Activated T-helper 2 cell treated with anti-CD3 and anti-CD28 coated beads, Interferon-gamma antibody, Interleukin-2, Interleukin-4, amounts not matched to agents 10 μg/mL and 5 μg/mL and 100 μg/mL, durations not matched to agents 14 hours and 24 hours and 36 hours (primary cell): ENCODE measurements at regions of chr9 and their contacts with region 1.

Region 1: GRCh38 chr9:120928483-120929228 is 2.1 kb upstream of the TRAF1 start:
- DNase-seq: peak; percentile 81
- H3K4me3 Mint-ChIP-seq: peak overlapping the region; percentile 92
- H3K27ac Mint-ChIP-seq: peak overlapping the region; percentile 98
- H3K4me1 Mint-ChIP-seq: peaks cover 67% of the 10 kb centered on the region
- H3K27me3 Mint-ChIP-seq: no peaks in the 10 kb centered on the region

Region 2: GRCh38 chr9:120868676-120869359 is 59.8 kb before region 1 on chr9:
- intact Hi-C with region 1: loop called (anchors 2 kb)
- DNase-seq: peak; percentile 93
- H3K4me3 Mint-ChIP-seq: peak overlapping the region; percentile 82
- H3K27ac Mint-ChIP-seq: peak overlapping the region; percentile 91
- H3K4me1 Mint-ChIP-seq: peaks cover 45% of the 10 kb centered on the region
- H3K27me3 Mint-ChIP-seq: no peaks in the 10 kb centered on the region

Region 3: DNA sequence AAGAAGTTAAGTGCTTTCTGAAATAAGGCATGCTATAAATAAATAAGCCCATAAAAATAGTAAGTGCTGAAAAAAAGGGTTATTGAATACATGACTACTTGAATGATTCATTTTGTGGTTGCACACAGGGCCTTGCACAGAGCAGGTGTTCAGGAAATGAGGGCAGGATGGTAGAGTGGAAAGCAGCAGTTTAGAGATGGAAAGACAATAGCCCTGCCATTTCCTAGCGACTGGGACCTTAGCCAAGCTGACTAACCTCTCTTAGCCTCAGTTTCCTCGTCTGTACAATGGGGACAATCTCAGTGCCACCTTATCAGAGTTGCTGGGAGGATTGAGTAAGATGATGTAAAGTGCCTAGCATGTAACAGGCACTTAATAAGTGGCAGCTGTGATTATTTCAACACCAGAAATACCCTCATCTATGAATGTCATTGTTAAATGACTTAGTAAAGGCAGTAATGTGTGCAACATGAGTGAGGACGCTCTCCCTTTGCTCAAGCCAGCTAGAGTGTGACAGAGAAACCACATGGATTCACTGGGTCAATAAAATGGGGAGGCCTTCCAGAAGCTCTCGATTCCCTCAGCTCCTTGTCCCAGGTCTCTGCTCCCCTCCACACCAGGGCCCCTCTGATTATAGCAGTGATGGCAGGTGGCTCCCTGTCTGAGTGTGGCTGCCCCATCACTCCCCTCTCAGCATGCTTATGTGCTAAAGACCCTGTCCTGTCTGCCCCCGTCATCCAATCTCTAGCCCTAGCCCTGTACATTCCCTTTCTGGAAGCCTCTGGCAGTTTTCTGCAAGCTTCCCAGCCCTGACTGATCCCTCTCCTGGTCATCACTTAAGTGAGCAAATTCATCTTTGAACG is 35.7 kb before region 1 on chr9:
- intact Hi-C with region 1: loop called (anchors 1 kb)
- DNase-seq: peak; percentile 66
- H3K4me3 Mint-ChIP-seq: peak overlapping the region; percentile 71
- H3K27ac Mint-ChIP-seq: peak overlapping the region; percentile 100
- H3K4me1 Mint-ChIP-seq: peaks cover 75% of the 10 kb centered on the region
- H3K27me3 Mint-ChIP-seq: no peaks in the 10 kb centered on the region

Region 4: GRCh38 chr9:120916588-120916987 is 12.1 kb before region 1 on chr9:
- intact Hi-C with region 1: loop called (anchors 1 kb)
- DNase-seq: no peak
- H3K4me3 Mint-ChIP-seq: peak overlapping the region; percentile 69
- H3K27ac Mint-ChIP-seq: peak overlapping the region; percentile 77
- H3K4me1 Mint-ChIP-seq: peaks cover 80% of the 10 kb centered on the region
- H3K27me3 Mint-ChIP-seq: no peaks in the 10 kb centered on the region

Region 5: GRCh38 chr9:121201738-121202533 is 273.3 kb after region 1 on chr9 and contains the start of gene RAB14:
- intact Hi-C with region 1: loop called (anchors 5 kb)
- DNase-seq: peak; percentile 100
- H3K4me3 Mint-ChIP-seq: peak within 1 kb of the TSS; percentile 96
- H3K27ac Mint-ChIP-seq: peak within 1 kb of the TSS; percentile 87
- H3K4me1 Mint-ChIP-seq: peaks cover 46% of the 10 kb centered on the region
- H3K27me3 Mint-ChIP-seq: no peaks in the 10 kb centered on the region
- total RNA-seq, gene RAB14: 62.0 and 63.2 TPM in 2 replicates